ENCODE measurements at regions of chr17 and their contacts with region 1.

Region 1: DNA sequence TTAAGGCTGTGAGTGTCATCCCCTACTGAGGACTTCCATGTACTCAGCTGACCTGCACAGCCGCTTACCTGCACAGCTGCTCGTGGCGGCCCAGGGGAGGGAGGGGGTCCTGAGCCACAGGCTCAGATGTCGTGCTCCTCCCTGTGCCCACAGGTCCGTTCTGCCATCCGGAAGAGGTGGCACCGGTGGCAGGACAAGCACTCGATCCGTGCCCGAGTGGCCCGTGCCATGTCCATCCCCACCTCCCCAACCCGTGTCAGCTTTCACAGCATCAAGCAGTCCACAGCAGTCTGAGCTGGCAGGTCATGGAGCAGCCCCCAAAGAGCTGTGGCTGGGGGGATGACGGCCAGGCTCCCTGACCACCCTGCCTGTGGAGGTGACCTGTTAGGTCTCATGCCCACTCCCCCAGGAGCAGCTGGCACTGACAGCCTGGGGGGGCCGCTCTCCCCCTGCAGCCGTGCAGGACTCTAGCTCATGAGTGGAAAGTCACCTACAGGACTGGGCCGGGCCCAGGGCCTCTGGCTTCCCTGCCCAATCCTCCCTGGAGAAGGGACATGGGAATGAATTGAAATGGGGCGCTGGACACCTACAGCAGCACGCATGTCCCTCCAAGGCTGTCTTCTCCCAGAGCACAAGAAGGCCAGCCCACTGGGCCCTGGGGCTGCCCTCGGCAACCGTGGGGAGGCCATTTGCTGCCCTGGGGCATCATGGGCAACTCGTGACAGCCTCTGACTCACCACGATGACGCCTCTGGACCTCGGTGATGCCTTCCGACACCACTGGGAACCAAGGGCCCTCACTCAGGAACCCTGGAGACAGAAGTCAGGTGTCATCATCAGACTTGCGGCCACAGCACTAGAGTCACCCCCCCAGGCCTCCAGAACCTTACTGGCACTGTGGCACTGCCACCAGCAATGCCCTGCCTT is 9.9 kb upstream of the SPPL2C start:
- DNase-seq: no peak

Region 2: GRCh38 chr17:45640141-45640850 is 194.4 kb before region 1 on chr17:
- intact Hi-C with region 1: loop called (anchors 5 kb)
- DNase-seq: peak; percentile 29 to 91 (median 81)

Region 3: DNA sequence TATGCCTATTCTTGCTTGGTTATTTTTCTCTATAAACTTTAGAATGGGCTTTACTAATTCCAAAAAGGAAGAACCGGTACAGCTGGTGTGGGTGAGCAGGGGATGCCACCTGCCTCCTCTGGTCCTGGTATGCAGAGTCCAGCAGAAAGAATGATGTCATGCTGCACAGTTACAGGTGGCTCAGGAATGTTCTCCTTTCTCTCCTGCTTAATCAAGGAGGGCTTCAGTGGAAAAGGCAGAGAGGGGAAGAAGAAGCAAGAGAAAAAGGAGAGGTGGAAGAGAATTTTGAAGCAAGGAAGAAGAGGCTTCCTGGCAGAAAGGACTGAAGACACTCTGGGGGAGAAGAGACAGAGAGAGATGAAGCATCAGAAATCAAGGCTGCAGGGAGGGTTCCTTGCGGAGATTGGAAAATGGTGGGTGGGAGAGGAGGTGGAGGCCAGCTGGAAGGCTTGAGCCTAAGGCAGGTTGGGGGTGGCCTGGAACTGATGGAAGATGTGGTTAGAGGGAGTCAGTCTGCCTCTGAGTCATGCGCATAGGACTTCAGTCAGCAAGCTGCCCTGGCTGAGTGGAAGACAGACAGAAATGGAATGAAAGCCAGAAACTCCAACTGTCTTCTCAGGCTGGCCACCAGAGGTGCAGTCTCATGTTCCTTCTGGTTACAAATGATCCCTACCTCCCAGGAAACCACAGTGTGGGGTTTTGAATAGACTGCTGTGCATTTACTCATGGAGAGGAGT is 115.2 kb before region 1 on chr17:
- intact Hi-C with region 1: loop called (anchors 10 kb)
- DNase-seq: peak in 4 of 42 donors; percentile 2 to 22 (median 15)